Adrenal gland (tissue), 19 donors: ENCODE measurements at regions of chr21 and their contacts with region 1.

Region 1: DNA sequence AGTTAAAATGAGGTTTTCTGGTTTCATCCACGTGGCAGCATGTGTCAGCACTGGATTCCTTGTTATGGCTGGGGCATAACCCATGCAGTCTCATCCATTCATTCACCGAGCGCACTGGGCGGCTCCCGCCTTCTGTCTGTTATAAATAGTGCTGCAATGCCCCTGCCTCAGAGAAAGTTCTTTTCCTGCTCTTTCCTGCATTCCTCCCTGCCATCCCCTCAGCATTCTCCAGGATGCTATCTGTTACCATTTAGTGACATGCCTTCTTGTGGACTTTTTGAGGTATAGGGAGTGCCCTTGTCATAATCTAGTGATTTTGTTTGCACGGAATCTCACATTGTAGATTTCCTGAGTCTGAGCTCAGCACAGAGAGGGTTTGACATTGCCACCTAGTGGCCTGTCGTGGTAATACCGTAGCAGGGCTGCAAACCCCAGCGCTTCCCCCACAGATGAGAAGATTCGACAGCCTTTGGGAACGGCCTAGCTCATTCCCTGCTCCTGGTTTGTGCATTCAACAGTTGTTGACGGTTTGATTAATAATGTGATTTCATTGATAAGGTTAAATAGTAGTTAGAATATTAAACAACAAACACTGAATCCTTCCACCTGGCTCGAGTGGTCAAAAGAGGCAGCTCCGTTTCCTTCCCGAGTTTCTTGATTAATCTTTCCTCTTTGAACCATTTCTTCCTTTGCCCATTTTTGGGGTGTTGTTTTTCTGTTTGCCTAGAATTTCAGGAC is 46.3 kb downstream of the UMODL1 start:
- DNase-seq: peak; percentile 65 to 92 (median 83)
- H3K4me3 ChIP-seq: peak overlapping the region in 1 of 4 donors; percentile 28
- H3K27ac ChIP-seq: no peak overlapping the region
- H3K4me1 ChIP-seq: no peaks in the 10 kb centered on the region
- H3K27me3 ChIP-seq: peaks cover 5% of the 10 kb centered on the region
- CTCF ChIP-seq: peak; percentile 90 to 97 (median 95)
- POLR2A ChIP-seq: no peak

Region 2: GRCh38 chr21:41612674-41613532 is 504.5 kb before region 1 on chr21:
- intact Hi-C with region 1: loop called (anchors 5 to 10 kb)
- DNase-seq: peak; percentile 30 to 64 (median 40)
- H3K4me3 ChIP-seq: no peak overlapping the region
- H3K27ac ChIP-seq: peak overlapping the region in 1 of 5 donors; percentile 54
- H3K4me1 ChIP-seq: no peaks in the 10 kb centered on the region
- H3K27me3 ChIP-seq: peaks cover 5% of the 10 kb centered on the region
- CTCF ChIP-seq: peak; percentile 32 to 70 (median 46)
- POLR2A ChIP-seq: no peak

Region 3: GRCh38 chr21:41816220-41817165 is 300.9 kb before region 1 on chr21:
- intact Hi-C with region 1: loop called (anchors 5 kb)
- DNase-seq: peak; percentile 62 to 81 (median 74)
- H3K4me3 ChIP-seq: no peak overlapping the region
- H3K27ac ChIP-seq: peak overlapping the region in 3 of 5 donors; percentile 20 to 67 (median 40)
- H3K4me1 ChIP-seq: peaks cover 0 to 9% of the 10 kb centered on the region in 2 donors
- H3K27me3 ChIP-seq: no peaks in the 10 kb centered on the region
- CTCF ChIP-seq: peak; percentile 54 to 84 (median 76)
- POLR2A ChIP-seq: no peak

Region 4: DNA sequence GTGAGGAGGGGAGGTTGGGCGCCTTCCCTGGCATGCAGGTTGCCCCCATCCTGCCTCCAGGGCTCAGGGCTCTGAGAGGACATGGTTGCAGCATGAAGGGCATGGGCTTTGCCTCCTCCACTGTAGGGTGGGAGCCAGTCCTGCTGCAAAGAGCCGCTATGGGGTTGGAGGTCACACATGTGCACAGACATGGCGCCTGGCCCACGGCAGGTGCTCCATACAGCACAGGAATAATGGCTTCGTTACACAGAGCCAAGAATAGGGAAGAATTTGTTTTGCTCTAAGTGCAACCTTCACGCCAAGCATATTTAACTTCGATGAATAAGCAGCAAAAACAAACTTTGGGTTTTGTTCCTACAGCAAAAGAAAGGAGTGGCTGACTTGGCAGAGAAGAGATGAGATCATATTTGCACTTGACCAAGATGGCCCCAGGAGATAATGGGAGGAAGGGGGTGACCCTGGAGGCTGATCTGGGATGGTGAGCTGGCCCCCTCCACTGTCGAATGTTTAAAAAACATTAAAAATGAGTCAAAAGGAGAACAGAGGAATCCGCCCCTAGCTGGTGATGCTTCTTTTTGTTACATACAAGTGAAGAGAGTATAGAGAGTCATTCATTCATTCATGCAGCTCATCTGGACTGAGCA is 151.2 kb before region 1 on chr21:
- intact Hi-C with region 1: no loop called
- DNase-seq: peak in 3 of 7 donors; percentile 26 to 56 (median 47)
- H3K4me3 ChIP-seq: no peak overlapping the region
- H3K27ac ChIP-seq: peak overlapping the region in 1 of 5 donors; percentile 24
- H3K4me1 ChIP-seq: peaks cover 9 to 14% of the 10 kb centered on the region in 2 donors
- H3K27me3 ChIP-seq: no peaks in the 10 kb centered on the region
- CTCF ChIP-seq: no peak
- POLR2A ChIP-seq: no peak